ENCODE measurements at regions of chr11 and their contacts with region 1.

Region 1: DNA sequence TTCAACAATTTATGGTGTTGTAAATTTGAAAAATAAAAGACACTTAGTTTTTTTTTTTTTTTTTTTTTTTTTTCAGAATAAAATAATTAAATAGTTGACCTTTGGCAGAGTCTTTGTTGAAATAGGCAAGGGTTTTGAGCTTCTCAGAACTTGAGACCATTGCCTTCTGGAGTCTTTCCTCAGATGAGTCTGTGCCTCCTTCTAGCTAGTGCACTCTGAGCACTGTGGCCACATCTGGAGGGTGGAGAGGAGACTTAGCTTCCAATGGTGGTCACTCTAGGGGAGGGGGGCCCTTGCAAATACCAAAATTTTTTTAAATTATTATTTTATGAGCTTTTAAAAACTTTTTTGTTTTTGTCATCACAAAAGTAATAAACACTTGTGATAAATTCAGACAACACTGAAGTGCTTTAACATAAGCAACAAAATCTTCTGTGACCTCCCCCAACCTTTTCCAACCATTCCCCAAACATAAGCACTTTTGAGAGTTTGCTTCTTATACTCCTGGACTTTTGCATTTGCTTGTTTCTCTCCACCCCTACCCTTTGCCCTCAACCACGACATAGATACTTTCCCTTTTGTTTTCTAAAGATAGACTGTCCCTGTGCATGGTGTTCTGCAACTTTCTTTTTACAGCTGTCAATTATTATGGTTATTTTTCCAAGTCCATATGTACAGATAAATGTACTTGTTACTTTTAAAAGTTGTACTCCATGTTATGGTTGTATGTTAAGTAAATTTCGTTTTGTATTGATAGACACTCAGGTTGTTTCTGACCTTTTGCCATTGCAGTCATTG is 41.1 kb downstream of the BMAL1 start:
- DNase-seq: no peak
- ATAC-seq: peak in 1 of 4 experiments; percentile 57
- H3K4me3 ChIP-seq: no peak overlapping the region
- H3K4me3 Mint-ChIP-seq: peak overlapping the region in 2 of 3 donors; percentile 24 to 26
- H3K27ac ChIP-seq: peak overlapping the region; percentile 12
- H3K27ac Mint-ChIP-seq: peak overlapping the region; percentile 9 to 12
- H3K4me1 ChIP-seq: peaks cover 0 to 52% of the 10 kb centered on the region in 2 experiments
- H3K4me1 Mint-ChIP-seq: peaks cover 70 to 90% (median 83%) of the 10 kb centered on the region in 3 donors
- H3K27me3 ChIP-seq: no peaks in the 10 kb centered on the region
- H3K27me3 Mint-ChIP-seq: no peaks in the 10 kb centered on the region

Region 2: DNA sequence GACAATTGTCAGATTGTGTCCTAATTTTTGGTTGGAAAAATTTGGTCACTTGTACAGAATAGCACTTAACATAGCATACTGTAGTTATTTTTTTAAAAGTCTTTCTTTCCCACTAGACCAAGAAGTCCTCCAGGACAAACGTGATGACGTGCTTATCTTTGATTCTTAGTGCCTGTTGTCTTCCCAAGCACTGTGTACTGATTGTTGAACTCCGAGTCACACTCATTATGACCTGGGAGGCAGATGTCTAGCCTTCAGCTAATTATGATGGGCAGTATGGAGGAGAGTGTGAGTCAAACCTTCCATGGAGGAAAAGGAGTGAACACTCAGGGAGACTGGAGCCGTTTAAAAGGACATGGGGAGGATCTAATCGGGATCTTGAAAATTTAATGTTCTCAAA is 763.6 kb after region 1 on chr11:
- CTCF ChIA-PET with region 1: no interaction called
- POLR2A ChIA-PET with region 1: interaction called in 1 of 2 experiments, 11 read pairs
- DNase-seq: no peak
- ATAC-seq: no peak
- H3K4me3 ChIP-seq: no peak overlapping the region
- H3K4me3 Mint-ChIP-seq: no peak overlapping the region
- H3K27ac ChIP-seq: no peak overlapping the region
- H3K27ac Mint-ChIP-seq: peak overlapping the region in 1 of 2 donors; percentile 15
- H3K4me1 ChIP-seq: peaks cover 15 to 25% of the 10 kb centered on the region in 2 experiments
- H3K4me1 Mint-ChIP-seq: peaks cover 29 to 47% (median 43%) of the 10 kb centered on the region in 3 donors
- H3K27me3 ChIP-seq: no peaks in the 10 kb centered on the region
- H3K27me3 Mint-ChIP-seq: no peaks in the 10 kb centered on the region

Region 3: DNA sequence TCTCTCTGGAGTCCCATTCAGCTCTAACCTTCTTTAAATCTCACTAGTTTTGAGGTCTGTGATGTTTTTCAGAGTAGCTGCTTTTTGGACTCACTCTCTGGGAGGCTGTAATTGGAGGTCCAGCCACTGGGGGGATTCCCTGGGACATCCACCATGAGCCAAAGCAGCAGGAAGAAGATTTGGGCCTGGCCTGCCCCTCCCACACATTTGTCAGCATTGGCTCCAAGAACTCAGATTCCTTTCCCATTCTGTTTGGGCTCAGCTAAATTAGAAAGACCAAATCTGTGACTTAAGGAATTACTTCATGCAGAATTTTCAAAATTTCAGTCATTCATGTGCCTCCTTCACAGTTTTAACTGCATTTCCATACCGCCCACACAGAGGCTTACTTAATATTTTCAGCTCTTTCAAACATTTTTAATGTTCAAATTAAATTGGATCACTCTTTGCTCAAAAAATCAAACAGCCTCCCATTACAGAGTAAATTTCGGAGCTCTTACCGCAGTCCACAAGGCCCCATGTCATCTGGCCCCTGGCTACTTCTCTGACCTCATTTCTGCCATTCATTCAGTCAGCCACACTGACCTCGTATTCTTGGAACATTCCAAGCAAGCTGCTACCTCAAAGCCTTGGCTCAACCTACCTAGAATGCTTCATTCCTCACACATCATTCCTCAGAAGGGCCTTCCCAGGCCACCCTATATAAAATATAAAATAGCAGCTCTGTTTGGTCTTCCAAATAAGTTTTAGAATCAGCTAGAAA is 1094.8 kb after region 1 on chr11:
- CTCF ChIA-PET with region 1: no interaction called
- POLR2A ChIA-PET with region 1: interaction called in 1 of 2 experiments, 12 read pairs
- DNase-seq: no peak
- ATAC-seq: no peak
- H3K4me3 ChIP-seq: no peak overlapping the region
- H3K4me3 Mint-ChIP-seq: no peak overlapping the region
- H3K27ac ChIP-seq: no peak overlapping the region
- H3K27ac Mint-ChIP-seq: peak overlapping the region; percentile 18 to 19
- H3K4me1 ChIP-seq: peaks cover 10 to 29% of the 10 kb centered on the region in 2 experiments
- H3K4me1 Mint-ChIP-seq: peaks cover 24 to 59% (median 38%) of the 10 kb centered on the region in 3 donors
- H3K27me3 ChIP-seq: no peaks in the 10 kb centered on the region
- H3K27me3 Mint-ChIP-seq: no peaks in the 10 kb centered on the region